Mammary epithelial cell (primary cell): ENCODE measurements at regions of chr20 and their contacts with region 1.

Region 1: GRCh38 chr20:44056010-44056698 is 130.8 kb downstream of the JPH2 start:
- DNase-seq: no peak
- H3K4me3 ChIP-seq: no peak overlapping the region
- H3K27ac ChIP-seq: no peak overlapping the region
- H3K4me1 ChIP-seq: no peaks in the 10 kb centered on the region
- H3K27me3 ChIP-seq: no peaks in the 10 kb centered on the region
- CTCF ChIP-seq: peak; percentile 14 to 41

Region 2: DNA sequence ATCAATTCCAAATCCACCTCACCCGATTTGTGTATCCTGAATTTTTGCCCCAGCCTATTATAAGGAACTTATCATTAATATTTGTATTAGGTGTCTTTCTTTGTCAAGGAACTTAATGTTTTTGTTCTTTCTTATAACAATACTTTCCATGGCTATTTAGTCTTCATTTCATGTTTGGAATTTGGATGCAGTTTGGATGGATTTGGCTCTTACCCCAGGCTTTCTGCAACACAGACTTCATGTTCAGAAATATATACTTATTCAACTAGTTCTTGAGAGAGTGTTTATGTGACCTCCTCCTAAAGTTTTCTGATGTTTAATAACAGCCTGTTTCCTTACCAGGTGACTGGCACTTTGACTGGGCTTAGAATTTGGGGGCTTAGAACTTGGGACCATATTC is 177.4 kb before region 1 on chr20:
- CTCF ChIA-PET with region 1: no interaction called
- dilution Hi-C with region 1: loop called (anchors 5 kb)
- in situ Hi-C with region 1: no loop called
- intact Hi-C with region 1: no loop called
- DNase-seq: no peak
- H3K4me3 ChIP-seq: no peak overlapping the region
- H3K27ac ChIP-seq: no peak overlapping the region
- H3K4me1 ChIP-seq: no peaks in the 10 kb centered on the region
- H3K27me3 ChIP-seq: peaks cover 3% of the 10 kb centered on the region
- CTCF ChIP-seq: no peak